Activated CD4-positive, alpha-beta T cell treated with anti-CD3 and anti-CD28 coated beads, Interleukin-2, amount 10 ng/mL, durations not matched to agents 24 days and 14 days (primary cell): ENCODE measurements at regions of chr11 and their contacts with region 1.

Region 1: DNA sequence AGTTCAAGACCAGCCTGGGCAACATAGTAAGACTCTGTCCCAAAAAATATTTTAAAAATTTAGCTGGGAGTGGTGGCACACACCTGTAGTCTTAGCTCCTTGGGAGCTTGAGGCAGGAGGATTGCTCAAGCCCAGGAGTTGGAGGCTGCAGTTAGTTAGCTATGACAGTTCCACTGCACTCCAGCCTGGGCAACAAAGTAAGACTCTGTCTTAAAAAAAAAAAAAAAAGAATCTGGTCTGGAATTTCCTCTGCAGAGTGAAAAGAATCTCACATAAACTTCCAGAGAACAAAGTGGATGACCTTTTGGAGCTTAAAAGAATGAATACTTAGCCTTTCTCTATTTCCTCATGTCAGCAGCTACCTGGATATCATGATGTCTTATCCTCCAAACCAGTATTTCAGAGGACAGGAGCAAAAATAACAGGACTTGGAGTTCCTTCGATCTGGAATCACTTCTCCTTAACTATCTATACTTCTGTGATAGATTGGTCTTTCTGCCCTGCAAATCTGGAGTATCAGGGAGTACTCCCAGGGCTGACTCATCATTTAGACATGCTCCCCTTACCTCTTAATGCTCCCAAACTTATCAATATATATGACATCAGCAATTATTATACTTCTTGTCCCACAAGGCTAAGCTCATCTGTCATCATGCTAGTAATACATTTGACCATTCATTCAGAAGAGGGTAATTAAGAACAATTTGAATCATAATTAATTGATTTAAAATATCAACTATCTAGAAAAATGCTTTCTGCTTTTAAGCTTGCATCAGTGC is 163.6 kb downstream of the SWAP70 start:
- DNase-seq: no peak
- H3K4me3 Mint-ChIP-seq: no peak overlapping the region
- H3K27ac Mint-ChIP-seq: no peak overlapping the region
- H3K4me1 Mint-ChIP-seq: peaks cover 11% of the 10 kb centered on the region
- H3K27me3 Mint-ChIP-seq: no peaks in the 10 kb centered on the region

Region 2: GRCh38 chr11:9787981-9788521 is 39.5 kb before region 1 on chr11:
- intact Hi-C with region 1: no loop called
- DNase-seq: no peak
- H3K4me3 Mint-ChIP-seq: no peak overlapping the region
- H3K27ac Mint-ChIP-seq: no peak overlapping the region
- H3K4me1 Mint-ChIP-seq: peaks cover 6% of the 10 kb centered on the region
- H3K27me3 Mint-ChIP-seq: no peaks in the 10 kb centered on the region

Region 3: GRCh38 chr11:9840460-9841004 is 13.0 kb after region 1 on chr11:
- intact Hi-C with region 1: loop called (anchors 2 kb)
- DNase-seq: peak; percentile 71
- H3K4me3 Mint-ChIP-seq: peak overlapping the region; percentile 23
- H3K27ac Mint-ChIP-seq: peak overlapping the region; percentile 71
- H3K4me1 Mint-ChIP-seq: peaks cover 33% of the 10 kb centered on the region
- H3K27me3 Mint-ChIP-seq: no peaks in the 10 kb centered on the region

Region 4: DNA sequence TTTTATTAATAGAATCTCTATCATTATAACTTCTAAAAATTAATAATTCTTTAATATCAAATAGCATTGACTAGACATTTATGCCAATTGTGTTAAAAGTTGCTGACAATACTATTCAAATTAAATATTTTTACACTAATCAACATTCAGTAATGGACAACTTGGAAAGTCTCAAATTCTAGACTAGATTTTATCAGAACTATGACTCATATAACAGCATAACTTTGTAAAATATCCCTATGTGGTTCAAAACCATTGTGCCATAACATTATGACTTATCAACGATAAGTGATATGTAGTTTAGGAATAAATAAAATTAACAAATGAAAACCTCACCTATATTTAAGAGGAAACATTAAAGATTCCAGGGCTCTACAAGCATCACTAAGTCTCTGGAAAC is 174.7 kb after region 1 on chr11:
- intact Hi-C with region 1: no loop called
- DNase-seq: no peak
- H3K4me3 Mint-ChIP-seq: no peak overlapping the region
- H3K27ac Mint-ChIP-seq: no peak overlapping the region
- H3K4me1 Mint-ChIP-seq: no peaks in the 10 kb centered on the region
- H3K27me3 Mint-ChIP-seq: no peaks in the 10 kb centered on the region